Activated CD4-positive, alpha-beta T cell treated with anti-CD3 and anti-CD28 coated beads for 36 hours (primary cell): ENCODE measurements at regions of chr20 and their contacts with region 1.

Region 1: DNA sequence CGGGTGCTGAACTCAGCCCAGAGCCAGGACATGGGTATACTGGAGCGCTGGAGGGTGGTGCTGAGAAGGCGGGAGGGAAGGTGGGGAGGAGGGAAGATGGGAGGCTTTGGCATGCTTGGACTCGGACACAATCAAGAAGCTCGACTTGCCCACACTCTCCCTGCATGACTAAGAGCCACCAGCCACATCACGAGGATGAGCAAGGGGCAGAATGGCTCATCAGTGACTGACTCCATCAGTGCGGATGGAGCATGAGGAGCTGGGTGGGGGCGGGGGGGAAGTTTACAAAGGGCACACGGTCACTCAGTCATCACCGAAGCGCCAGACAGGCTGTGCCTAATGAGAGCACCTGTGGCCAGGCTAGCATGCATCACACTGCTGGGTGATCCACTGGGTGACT is 222.8 kb downstream of the KIF16B start:
- DNase-seq: no peak
- ATAC-seq: no peak
- H3K4me3 Mint-ChIP-seq: no peak overlapping the region
- H3K27ac Mint-ChIP-seq: no peak overlapping the region
- H3K4me1 Mint-ChIP-seq: no peaks in the 10 kb centered on the region
- H3K27me3 Mint-ChIP-seq: no peaks in the 10 kb centered on the region

Region 2: GRCh38 chr20:16434062-16434664 is 83.7 kb after region 1 on chr20:
- CTCF ChIA-PET with region 1: no interaction called
- POLR2A ChIA-PET with region 1: no interaction called
- intact Hi-C with region 1: loop called in 1 of 2 experiments (anchors 5 kb)
- DNase-seq: peak; percentile 70
- ATAC-seq: no peak
- H3K4me3 Mint-ChIP-seq: no peak overlapping the region
- H3K27ac Mint-ChIP-seq: no peak overlapping the region
- H3K4me1 Mint-ChIP-seq: no peaks in the 10 kb centered on the region
- H3K27me3 Mint-ChIP-seq: no peaks in the 10 kb centered on the region

Region 3: GRCh38 chr20:16580147-16580546 is 229.7 kb after region 1 on chr20:
- CTCF ChIA-PET with region 1: no interaction called
- POLR2A ChIA-PET with region 1: no interaction called
- intact Hi-C with region 1: no loop called
- DNase-seq: no peak
- ATAC-seq: no peak
- H3K4me3 Mint-ChIP-seq: no peak overlapping the region
- H3K27ac Mint-ChIP-seq: no peak overlapping the region
- H3K4me1 Mint-ChIP-seq: peaks cover 9% of the 10 kb centered on the region
- H3K27me3 Mint-ChIP-seq: peaks cover 8% of the 10 kb centered on the region